A549 (cell line): ENCODE measurements at regions of chr2 and their contacts with region 1.

Region 1: GRCh38 chr2:112941753-112942658 is 31.0 kb downstream of the IL37 start:
- DNase-seq: peak; percentile 43 to 78
- ATAC-seq: peak; percentile 97 to 99
- H3K4me3 ChIP-seq: no peak overlapping the region
- H3K27ac ChIP-seq: no peak overlapping the region
- H3K4me1 ChIP-seq: no peaks in the 10 kb centered on the region
- CTCF ChIP-seq: peak; percentile 70
- EP300 ChIP-seq: no peak
- POLR2A ChIP-seq: no peak
- RAD21 ChIP-seq: peak; percentile 78 to 90

Region 2: GRCh38 chr2:112737542-112738232 is 204.3 kb before region 1 on chr2:
- CTCF ChIA-PET with region 1: interaction called, 20 read pairs
- POLR2A ChIA-PET with region 1: no interaction called
- DNase-seq: no peak
- ATAC-seq: 0 out of 6 replicates have a peak, but pooled peaks of 1 of the 2 experiments have one; percentile 38
- H3K4me3 ChIP-seq: no peak overlapping the region
- H3K27ac ChIP-seq: peak overlapping the region in 1 of 2 experiments; percentile 13; a peak in 1 of 6 replicates
- H3K4me1 ChIP-seq: peaks cover 18% of the 10 kb centered on the region
- CTCF ChIP-seq: no peak
- EP300 ChIP-seq: no peak
- POLR2A ChIP-seq: no peak
- RAD21 ChIP-seq: no peak

Region 3: DNA sequence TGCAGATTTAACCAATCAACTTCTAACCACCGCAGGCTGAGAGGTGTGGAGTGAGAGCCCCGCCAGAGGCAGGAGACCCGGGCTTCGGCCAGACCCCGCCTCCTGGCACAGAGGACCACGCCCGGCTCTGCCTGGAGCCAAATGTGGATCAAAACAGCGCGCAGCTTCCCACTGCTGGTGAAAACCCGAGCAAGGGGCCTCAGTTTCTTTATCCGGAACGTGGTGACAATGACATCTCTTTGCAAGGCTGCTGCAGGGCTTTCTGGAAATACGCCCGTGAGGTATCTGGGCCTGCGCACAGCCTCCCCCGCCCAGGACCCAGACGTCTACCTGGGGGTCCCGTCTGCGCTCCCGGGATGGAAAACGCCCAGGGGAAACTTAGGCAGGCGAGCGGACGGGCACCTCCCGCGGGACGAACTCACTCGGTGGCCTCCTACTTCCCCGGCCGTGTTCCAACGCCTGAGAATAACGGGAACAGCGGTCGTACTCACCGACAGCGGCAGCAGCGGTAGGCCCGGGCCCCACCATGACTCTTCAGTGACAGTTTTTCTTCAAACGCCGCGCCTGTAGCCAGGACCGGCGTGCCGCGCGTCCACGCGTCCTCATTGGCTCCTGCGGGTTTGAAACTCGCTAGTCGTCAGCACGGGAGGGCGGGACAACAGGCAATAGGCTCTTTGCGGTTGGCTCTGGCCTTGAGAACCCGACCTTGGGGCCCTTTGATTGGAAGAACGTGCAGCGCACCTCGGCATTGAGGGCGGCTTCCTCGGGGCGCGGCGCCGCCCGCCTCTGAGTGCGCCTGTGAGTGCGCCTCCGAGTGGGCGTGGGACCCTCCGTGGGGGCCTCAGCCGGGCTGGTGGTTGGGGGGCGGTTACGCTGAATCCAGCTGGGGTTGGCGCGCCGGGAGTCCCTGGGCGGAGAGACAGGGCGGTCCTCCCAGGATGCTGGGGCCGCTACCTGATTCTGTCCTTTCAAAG is 177.6 kb before region 1 on chr2 and contains the start of gene CKAP2L:
- CTCF ChIA-PET with region 1: interaction called, 10 read pairs
- POLR2A ChIA-PET with region 1: no interaction called
- DNase-seq: peak; percentile 96 to 98
- ATAC-seq: peak; percentile 99
- H3K4me3 ChIP-seq: peak within 1 kb of the TSS; percentile 75
- H3K27ac ChIP-seq: peak within 1 kb of the TSS; percentile 75 to 86
- H3K4me1 ChIP-seq: peaks cover 29% of the 10 kb centered on the region; the same call in 2 of the 3 replicates
- CTCF ChIP-seq: no peak
- EP300 ChIP-seq: no peak
- POLR2A ChIP-seq: no peak
- RAD21 ChIP-seq: no peak
- polyA plus RNA-seq, gene CKAP2L: 11.3 and 14.0 TPM in 2 replicates

Region 4: DNA sequence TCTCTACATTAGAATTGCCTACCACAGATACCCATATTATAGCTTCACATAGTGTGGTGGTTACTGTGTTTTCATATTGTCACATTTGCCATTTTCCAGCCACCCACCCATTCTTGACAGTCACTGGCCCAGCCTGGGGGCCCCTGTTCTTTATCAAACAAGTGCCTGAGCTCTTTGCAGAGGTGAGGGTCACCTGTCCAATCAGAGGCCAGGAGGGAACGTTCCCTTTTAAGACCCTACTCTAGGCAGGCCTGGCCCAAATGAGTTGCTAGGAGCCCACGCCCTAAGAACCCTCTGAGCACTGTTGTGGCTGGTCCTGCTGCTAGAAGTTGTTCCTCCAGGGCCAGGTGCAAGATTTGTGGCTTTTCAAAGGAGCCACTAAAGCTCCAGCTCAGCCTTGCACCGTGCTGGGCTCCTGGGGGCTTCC is 25.8 kb before region 1 on chr2:
- CTCF ChIA-PET with region 1: interaction called, 17 read pairs
- POLR2A ChIA-PET with region 1: no interaction called
- DNase-seq: no peak
- ATAC-seq: no peak
- H3K4me3 ChIP-seq: no peak overlapping the region
- H3K27ac ChIP-seq: no peak overlapping the region
- H3K4me1 ChIP-seq: no peaks in the 10 kb centered on the region
- CTCF ChIP-seq: no peak
- EP300 ChIP-seq: no peak
- POLR2A ChIP-seq: no peak
- RAD21 ChIP-seq: no peak

Region 5: GRCh38 chr2:112924821-112925220 is 17.2 kb before region 1 on chr2:
- CTCF ChIA-PET with region 1: interaction called, 40 read pairs
- POLR2A ChIA-PET with region 1: no interaction called
- DNase-seq: peak in 1 of 2 experiments; percentile 16
- ATAC-seq: peak in 1 of 2 experiments; percentile 68; a peak in 3 of 6 replicates
- H3K4me3 ChIP-seq: no peak overlapping the region
- H3K27ac ChIP-seq: no peak overlapping the region
- H3K4me1 ChIP-seq: peaks cover 14% of the 10 kb centered on the region
- CTCF ChIP-seq: no peak
- EP300 ChIP-seq: no peak
- POLR2A ChIP-seq: no peak
- RAD21 ChIP-seq: no peak

Region 6: GRCh38 chr2:112958428-112959108 is 16.6 kb after region 1 on chr2:
- CTCF ChIA-PET with region 1: interaction called, 25 read pairs
- POLR2A ChIA-PET with region 1: no interaction called
- DNase-seq: peak; percentile 48 to 60
- ATAC-seq: peak; percentile 82 to 96
- H3K4me3 ChIP-seq: no peak overlapping the region
- H3K27ac ChIP-seq: no peak overlapping the region
- H3K4me1 ChIP-seq: no peaks in the 10 kb centered on the region
- CTCF ChIP-seq: peak; percentile 82
- EP300 ChIP-seq: no peak
- POLR2A ChIP-seq: no peak
- RAD21 ChIP-seq: peak; percentile 67 to 72